Spleen (tissue), 13 donors: ENCODE measurements at regions of chr2 and their contacts with region 1.

Region 1: DNA sequence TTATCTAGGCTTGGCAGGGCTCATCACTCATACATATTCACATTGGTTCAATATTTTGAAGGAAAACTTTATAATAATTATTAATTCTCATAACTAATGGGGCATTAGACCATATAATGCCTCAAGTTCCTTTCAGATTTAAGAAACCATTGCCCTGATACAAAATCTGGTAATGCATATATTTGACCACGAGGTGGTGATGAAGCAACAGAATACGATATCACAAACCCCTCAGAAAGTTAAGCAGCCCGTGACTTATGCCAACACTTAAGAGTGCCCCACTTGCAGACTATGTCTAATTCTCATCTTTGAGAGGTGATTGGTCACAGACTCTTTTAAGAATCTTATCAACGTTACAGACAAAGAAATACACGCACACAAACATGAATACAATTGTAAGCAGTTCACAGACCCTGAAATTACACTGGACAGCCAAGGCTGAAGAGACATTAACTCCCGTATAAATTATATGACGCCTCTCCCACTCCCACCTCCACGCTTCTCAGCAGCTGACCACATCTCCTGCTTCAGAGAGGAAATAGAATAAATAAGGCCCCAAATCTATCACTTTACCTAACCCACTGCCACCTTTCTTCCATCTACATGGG is 20.7 kb upstream of the DNAH6 start:
- DNase-seq: no peak
- H3K4me3 ChIP-seq: no peak overlapping the region
- H3K27ac ChIP-seq: no peak overlapping the region
- H3K4me1 ChIP-seq: peaks cover 0 to 5% (median 0%) of the 10 kb centered on the region in 6 donors
- H3K27me3 ChIP-seq: peaks cover 0 to 7% (median 0%) of the 10 kb centered on the region in 7 donors
- CTCF ChIP-seq: peak; percentile 49 to 84 (median 73)
- POLR2A ChIP-seq: no peak

Region 2: DNA sequence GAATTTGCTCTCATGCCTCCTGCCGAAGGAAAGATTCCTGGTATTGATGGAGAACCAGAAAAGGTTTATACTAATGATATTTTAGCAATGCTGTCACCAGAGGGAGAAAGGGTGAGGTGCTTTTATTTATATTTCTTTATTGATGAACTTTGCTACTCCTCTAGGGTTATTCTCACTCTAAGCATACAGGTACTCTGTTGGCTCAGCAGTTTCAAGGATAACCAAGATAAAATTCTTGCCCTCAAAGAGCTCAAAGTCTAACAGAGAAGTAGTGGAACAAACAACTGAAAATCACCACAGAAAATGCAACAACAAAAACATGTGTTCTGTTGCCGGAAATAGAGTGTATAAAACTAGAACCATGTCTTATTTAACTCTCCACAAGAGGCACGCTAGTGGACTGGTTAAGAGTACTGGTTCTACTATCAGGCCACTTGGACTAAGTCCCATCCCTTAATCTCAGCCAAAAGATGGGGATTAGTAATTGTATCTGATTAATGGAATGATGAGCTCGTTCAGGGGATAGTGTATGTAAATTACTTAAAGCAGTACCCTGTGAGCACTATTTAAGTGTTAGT is 124.2 kb after region 1 on chr2:
- intact Hi-C with region 1: loop called (anchors 10 kb)
- DNase-seq: no peak
- H3K4me3 ChIP-seq: no peak overlapping the region
- H3K27ac ChIP-seq: no peak overlapping the region
- H3K4me1 ChIP-seq: no peaks in the 10 kb centered on the region
- H3K27me3 ChIP-seq: no peaks in the 10 kb centered on the region
- CTCF ChIP-seq: no peak
- POLR2A ChIP-seq: no peak

Region 3: GRCh38 chr2:84865181-84865783 is 369.6 kb after region 1 on chr2:
- intact Hi-C with region 1: loop called (anchors 5 kb)
- DNase-seq: no peak
- H3K4me3 ChIP-seq: no peak overlapping the region
- H3K27ac ChIP-seq: peak overlapping the region in 1 of 8 donors; percentile 16
- H3K4me1 ChIP-seq: peaks cover 0 to 15% (median 1%) of the 10 kb centered on the region in 6 donors
- H3K27me3 ChIP-seq: no peaks in the 10 kb centered on the region
- CTCF ChIP-seq: peak in 8 of 11 experiments; percentile 23 to 66 (median 54)
- POLR2A ChIP-seq: no peak

Region 4: DNA sequence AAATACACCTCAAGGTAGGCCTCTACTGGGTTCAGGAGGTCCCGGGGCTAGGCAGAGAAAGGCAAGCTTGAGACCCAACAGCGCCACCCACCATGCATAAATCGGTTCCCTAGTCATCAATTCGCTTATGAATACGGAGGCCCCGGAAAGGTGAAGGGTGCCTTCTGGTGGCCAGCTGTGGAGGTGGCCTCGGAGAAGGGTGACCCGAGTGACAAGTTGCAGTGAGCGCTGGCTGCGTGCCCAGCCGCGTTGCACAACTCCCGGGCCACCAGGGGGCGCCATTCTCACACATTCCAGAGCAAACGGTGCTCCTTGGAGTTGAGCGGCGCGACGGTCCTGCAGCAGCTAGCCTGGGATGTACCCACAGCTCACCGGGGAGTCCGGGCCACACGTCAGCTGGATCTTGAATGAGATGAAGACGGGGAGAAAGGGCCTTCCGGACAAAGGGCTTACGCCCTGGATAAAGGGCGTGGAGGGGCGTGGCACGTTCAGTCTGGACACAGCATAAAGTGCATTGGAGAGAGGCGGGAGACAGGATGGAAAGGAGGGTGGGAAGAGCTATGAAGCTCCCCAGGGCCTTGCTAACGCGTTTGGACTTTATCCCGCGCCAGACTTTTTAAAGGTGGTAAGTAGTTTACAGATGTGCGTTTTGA is 430.2 kb after region 1 on chr2:
- intact Hi-C with region 1: loop called (anchors 5 kb)
- DNase-seq: peak; percentile 99
- H3K4me3 ChIP-seq: peak overlapping the region; percentile 29 to 79 (median 52)
- H3K27ac ChIP-seq: peak overlapping the region in 6 of 8 donors; percentile 27 to 81 (median 75)
- H3K4me1 ChIP-seq: peaks cover 16 to 48% (median 39%) of the 10 kb centered on the region in 6 donors
- H3K27me3 ChIP-seq: no peaks in the 10 kb centered on the region
- CTCF ChIP-seq: peak; percentile 98 to 100 (median 99)
- POLR2A ChIP-seq: no peak